Common myeloid progenitor, CD34-positive (primary cell): ENCODE measurements at regions of chr2 and their contacts with region 1.

Region 1: GRCh38 chr2:239991689-239992314 is 33.3 kb downstream of the NDUFA10 start:
- DNase-seq: peak; percentile 52 to 77 (median 69)
- H3K4me3 ChIP-seq: no peak overlapping the region
- H3K27ac ChIP-seq: no peak overlapping the region
- H3K4me1 ChIP-seq: no peaks in the 10 kb centered on the region
- H3K27me3 ChIP-seq: no peaks in the 10 kb centered on the region

Region 2: DNA sequence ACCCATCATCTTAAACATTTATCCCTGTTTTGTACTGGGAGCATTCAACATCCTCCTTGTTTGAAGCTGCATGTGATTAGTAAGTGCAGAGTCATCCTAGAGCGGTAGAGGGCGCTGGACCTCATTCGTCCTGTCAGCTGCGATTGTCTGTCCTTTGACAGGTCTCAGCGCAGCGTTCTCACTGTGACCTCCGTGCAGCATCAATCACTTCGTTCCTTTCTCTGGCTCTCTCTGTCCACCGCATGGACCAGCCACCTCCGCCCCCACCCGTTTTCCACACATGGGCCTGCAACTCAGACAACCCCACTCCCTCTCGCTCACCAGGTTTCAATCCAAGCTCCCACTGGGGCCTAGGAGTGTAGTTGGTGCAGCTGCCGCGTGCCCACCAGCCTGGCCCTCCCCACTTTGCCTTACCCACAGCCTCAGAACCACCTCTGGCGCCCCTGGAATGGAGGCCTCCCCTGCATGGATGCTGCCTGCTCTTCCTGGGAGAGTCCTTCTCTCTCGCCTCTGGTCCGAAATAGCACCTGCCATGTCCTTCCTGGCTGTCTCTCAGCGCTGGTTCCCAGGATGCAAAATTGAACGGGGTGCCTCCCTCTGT is 57.1 kb before region 1 on chr2:
- CTCF ChIA-PET with region 1: interaction called, 32 read pairs
- POLR2A ChIA-PET with region 1: no interaction called
- DNase-seq: peak; percentile 62 to 82 (median 80)
- H3K4me3 ChIP-seq: no peak overlapping the region
- H3K27ac ChIP-seq: no peak overlapping the region
- H3K4me1 ChIP-seq: peaks cover 0 to 6% (median 2%) of the 10 kb centered on the region in 4 experiments
- H3K27me3 ChIP-seq: no peaks in the 10 kb centered on the region

Region 3: DNA sequence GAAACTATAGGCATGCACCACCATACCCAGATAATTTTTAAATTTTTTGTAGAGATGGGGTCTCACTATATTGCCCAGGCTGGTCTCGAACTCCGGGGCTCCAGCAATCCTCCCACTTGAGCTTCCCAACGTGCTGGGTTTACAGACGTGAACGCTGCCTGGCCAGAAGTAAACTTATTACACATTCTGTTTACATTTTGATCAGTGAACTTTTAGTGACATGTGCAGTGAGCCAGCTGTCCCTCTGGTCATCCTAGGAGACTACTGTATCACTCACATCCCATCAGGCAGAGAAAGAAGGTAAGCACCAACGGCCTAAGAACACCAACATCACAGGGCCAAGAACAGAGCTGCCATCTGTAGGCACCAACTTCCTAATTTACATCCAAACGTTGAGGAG is 11.2 kb after region 1 on chr2:
- CTCF ChIA-PET with region 1: interaction called, 20 read pairs
- POLR2A ChIA-PET with region 1: no interaction called
- DNase-seq: no peak
- H3K4me3 ChIP-seq: no peak overlapping the region
- H3K27ac ChIP-seq: no peak overlapping the region
- H3K4me1 ChIP-seq: no peaks in the 10 kb centered on the region
- H3K27me3 ChIP-seq: no peaks in the 10 kb centered on the region